ENCODE measurements at regions of chr19 and their contacts with region 1.

Region 1: DNA sequence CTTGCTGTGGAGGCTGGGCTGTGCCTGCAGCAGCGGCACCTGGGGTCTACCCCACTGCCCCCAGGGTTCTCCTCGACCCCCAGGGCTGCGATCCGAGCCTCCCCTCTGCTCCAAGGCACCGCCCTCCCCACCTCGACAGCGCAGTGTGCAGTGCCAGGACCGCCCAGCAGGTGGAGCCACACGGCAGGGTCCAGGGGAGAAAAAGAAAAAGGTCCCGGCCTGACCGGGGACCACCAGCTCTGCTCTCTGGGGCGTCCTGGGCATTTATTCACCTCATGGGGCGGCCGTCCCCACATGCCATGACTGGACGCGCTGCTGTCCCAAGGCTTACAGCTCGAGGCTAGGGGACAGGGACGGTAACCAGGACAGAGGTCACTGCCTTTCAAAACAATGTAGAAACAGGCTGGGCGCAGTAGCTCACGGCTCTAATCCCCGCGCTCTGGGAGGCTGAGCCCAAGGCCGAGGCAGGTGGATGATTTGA is 10.6 kb downstream of the REXO1 start:
- DNase-seq: peak in 1 of 2 experiments; percentile 64
- ATAC-seq: peak; percentile 32 to 77; a peak in 5 of 6 replicates
- H3K4me3 ChIP-seq: no peak overlapping the region
- H3K27ac ChIP-seq: 0 out of 6 replicates have a peak overlapping the region, but pooled peaks of 1 of the 2 experiments have one; percentile 13
- H3K4me1 ChIP-seq: no peaks in the 10 kb centered on the region
- CTCF ChIP-seq: peak; percentile 64
- EP300 ChIP-seq: no peak
- POLR2A ChIP-seq: no peak
- RAD21 ChIP-seq: 0 out of 5 replicates have a peak, but pooled peaks have one; percentile 7 to 15

Region 2: GRCh38 chr19:1812469-1813196 is 25.0 kb before region 1 on chr19:
- CTCF ChIA-PET with region 1: interaction called, 11 read pairs
- POLR2A ChIA-PET with region 1: no interaction called
- DNase-seq: peak; percentile 88 to 97
- ATAC-seq: peak; percentile 79 to 91
- H3K4me3 ChIP-seq: peak overlapping the region; percentile 81
- H3K27ac ChIP-seq: peak overlapping the region; percentile 92 to 96
- H3K4me1 ChIP-seq: peaks cover 13% of the 10 kb centered on the region
- CTCF ChIP-seq: peak; percentile 63
- EP300 ChIP-seq: no peak
- POLR2A ChIP-seq: no peak; the same call in 1 of the 2 replicates
- RAD21 ChIP-seq: peak; percentile 75 to 78

Region 3: GRCh38 chr19:1825909-1826556 is 11.6 kb before region 1 on chr19:
- CTCF ChIA-PET with region 1: interaction called, 212 read pairs
- POLR2A ChIA-PET with region 1: no interaction called
- DNase-seq: peak; percentile 62 to 88
- ATAC-seq: peak; percentile 85 to 89
- H3K4me3 ChIP-seq: no peak overlapping the region
- H3K27ac ChIP-seq: peak overlapping the region in 1 of 2 experiments; percentile 51; a peak in 2 of 6 replicates
- H3K4me1 ChIP-seq: peaks cover 10% of the 10 kb centered on the region
- CTCF ChIP-seq: peak; percentile 65
- EP300 ChIP-seq: no peak
- POLR2A ChIP-seq: no peak
- RAD21 ChIP-seq: peak; percentile 62 to 68

Region 4: GRCh38 chr19:1848399-1849131 is 10.9 kb after region 1 on chr19 and contains the start of gene REXO1:
- CTCF ChIA-PET with region 1: interaction called, 60 read pairs
- POLR2A ChIA-PET with region 1: interaction called, 3 read pairs
- DNase-seq: peak; percentile 52 to 93
- ATAC-seq: peak; percentile 64 to 70
- H3K4me3 ChIP-seq: peak within 1 kb of the TSS; percentile 91
- H3K27ac ChIP-seq: peak within 1 kb of the TSS; percentile 99 to 100
- H3K4me1 ChIP-seq: peaks cover 27% of the 10 kb centered on the region
- CTCF ChIP-seq: peak; percentile 69
- EP300 ChIP-seq: no peak
- POLR2A ChIP-seq: peak; percentile 29; the same call in 1 of the 2 replicates
- RAD21 ChIP-seq: peak in 1 of 2 experiments; percentile 24; a peak in 1 of 5 replicates
- polyA plus RNA-seq, gene REXO1: 5.6 and 7.3 TPM in 2 replicates

Region 5: GRCh38 chr19:1856698-1857603 is 19.3 kb after region 1 on chr19:
- CTCF ChIA-PET with region 1: interaction called, 60 read pairs
- POLR2A ChIA-PET with region 1: interaction called, 3 read pairs
- DNase-seq: peak; percentile 71 to 87
- ATAC-seq: peak; percentile 35 to 49
- H3K4me3 ChIP-seq: peak overlapping the region; percentile 35
- H3K27ac ChIP-seq: peak overlapping the region; percentile 95 to 100
- H3K4me1 ChIP-seq: peaks cover 87% of the 10 kb centered on the region
- CTCF ChIP-seq: no peak
- EP300 ChIP-seq: no peak
- POLR2A ChIP-seq: no peak
- RAD21 ChIP-seq: no peak

Measured in A549 (cell line).